Body of pancreas (tissue), 4 donors: ENCODE measurements at regions of chr3 and their contacts with region 1.

Region 1: GRCh38 chr3:73086071-73086494 is 24.6 kb downstream of the EBLN2 start:
- DNase-seq: peak; percentile 45 to 63 (median 52)
- ATAC-seq: peak; percentile 33
- H3K4me3 ChIP-seq: no peak overlapping the region
- H3K27ac ChIP-seq: no peak overlapping the region
- H3K4me1 ChIP-seq: no peaks in the 10 kb centered on the region
- H3K27me3 ChIP-seq: no peaks in the 10 kb centered on the region
- CTCF ChIP-seq: peak; percentile 44 to 82 (median 76)
- POLR2A ChIP-seq: no peak

Region 2: DNA sequence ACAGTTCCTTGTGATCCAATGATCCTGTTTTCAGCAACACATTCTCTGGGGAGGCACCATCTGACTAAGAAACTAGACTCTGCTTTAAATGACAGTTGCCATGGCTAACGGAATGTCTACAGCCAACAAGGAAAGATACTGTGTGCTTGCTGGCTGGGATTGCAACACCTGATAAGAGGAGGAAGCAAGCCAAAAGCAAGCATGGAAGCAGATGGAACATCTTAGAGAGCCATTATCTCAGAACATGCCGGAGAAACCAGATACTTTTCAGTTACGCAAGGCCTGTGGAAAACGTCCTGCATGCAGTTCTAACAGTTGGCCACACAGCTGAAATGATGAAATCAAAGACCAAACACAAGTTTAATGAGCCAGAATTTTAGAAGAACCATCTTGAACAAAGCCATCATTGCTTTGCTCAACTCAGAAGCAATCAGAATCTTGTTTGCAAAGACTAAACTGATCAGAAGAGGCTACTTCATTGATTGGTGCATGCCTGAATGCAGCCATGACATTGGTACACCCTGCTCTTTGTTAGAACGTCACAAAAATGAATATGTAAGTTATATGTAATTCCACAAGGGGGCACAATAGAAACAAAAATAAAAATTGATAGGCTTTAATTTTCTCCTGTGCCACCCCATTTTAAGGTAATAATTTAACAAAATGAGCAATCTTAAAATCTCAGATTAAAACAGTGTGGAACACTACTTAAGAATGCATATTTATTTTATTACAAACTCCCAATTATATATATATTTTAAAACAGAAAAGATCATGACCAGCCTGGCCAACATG is 147.4 kb before region 1 on chr3:
- intact Hi-C with region 1: loop called (anchors 10 kb)
- DNase-seq: peak; percentile 48 to 83 (median 56)
- ATAC-seq: peak; percentile 89
- H3K4me3 ChIP-seq: no peak overlapping the region
- H3K27ac ChIP-seq: peak overlapping the region; percentile 6 to 58 (median 36)
- H3K4me1 ChIP-seq: peaks cover 9% of the 10 kb centered on the region
- H3K27me3 ChIP-seq: no peaks in the 10 kb centered on the region
- CTCF ChIP-seq: peak in 6 of 7 experiments; percentile 35 to 94 (median 54)
- POLR2A ChIP-seq: no peak

Region 3: DNA sequence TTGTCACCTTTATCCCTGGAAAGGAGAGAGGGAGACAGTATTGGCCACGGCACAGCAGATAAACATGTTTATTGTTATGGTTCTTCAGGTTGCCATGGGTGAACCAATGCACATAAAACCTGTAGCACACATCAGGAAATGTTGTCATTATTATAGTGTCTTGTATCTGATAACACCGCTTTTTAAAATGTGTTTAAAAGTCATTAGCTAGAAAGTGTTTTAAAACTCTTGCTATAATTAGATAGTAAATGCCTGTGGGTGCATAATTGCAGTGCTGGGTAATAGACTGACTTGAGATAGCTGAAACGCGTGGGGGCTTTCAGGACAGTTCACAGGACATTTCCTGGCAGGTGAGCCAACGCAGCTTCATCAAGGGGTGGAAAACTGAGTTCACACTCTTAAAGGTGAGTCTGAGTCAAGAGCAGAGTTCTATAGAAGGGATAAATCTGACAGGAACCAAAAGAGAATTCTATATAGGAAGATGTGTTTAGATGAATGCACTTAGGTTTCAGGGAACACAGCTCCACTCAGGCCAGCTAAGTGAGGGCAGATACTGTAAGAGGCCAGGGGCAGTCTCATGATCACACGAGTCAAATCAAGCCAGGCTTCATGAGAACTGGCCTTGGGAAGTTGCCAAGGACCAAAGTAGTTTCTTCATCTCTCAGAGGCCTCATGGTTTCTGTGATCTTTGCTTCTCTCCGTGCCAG is 125.1 kb before region 1 on chr3:
- intact Hi-C with region 1: no loop called
- DNase-seq: peak; percentile 21 to 53 (median 51)
- ATAC-seq: peak; percentile 54
- H3K4me3 ChIP-seq: no peak overlapping the region
- H3K27ac ChIP-seq: peak overlapping the region in 2 of 4 donors; percentile 10 to 53
- H3K4me1 ChIP-seq: peaks cover 27% of the 10 kb centered on the region
- H3K27me3 ChIP-seq: no peaks in the 10 kb centered on the region
- CTCF ChIP-seq: no peak
- POLR2A ChIP-seq: no peak